ENCODE measurements at regions of chr11 and their contacts with region 1.

Region 1: GRCh38 chr11:117107701-117108590 is 9.7 kb upstream of the SIK3 start:
- H3K4me3 ChIP-seq: no peak overlapping the region
- H3K27ac ChIP-seq: no peak overlapping the region
- H3K4me1 ChIP-seq: no peaks in the 10 kb centered on the region
- CTCF ChIP-seq: no peak

Region 2: DNA sequence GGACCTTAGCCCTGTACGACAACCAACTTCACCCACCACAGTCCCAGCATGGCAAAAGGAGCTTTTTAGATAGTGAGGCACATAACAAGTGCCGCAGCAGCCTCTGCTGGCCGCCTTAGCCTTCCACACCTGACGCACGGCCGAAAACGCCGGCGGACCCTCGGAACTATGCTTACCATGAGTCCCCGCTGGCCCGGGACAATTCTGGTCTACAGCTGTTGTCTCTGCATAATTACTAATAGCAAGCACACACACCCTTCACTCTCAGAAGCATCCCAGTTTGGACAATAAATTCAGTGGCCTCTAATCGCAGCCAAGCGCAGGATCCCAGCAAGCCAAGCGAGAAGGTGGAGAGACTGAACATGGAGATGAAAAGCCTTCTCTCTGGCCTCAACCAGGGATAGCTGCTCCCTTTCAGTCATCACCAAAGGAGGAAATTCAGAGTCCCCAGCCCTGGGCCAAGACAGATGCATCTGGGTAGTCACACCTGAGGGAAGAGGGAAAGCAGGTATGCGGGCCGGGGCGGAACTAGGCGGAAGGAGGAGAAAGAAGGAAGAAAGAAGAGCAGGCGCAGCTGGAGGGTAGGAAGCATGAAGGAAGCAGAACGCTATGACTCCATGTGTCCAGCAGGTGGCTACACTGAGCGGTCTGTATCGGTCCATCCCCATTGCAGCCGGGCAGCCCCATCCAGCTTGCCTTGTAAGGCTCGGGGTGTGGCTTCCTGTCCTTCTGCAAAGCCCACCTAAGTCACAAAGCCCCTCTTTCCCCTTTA is 375.5 kb before region 1 on chr11:
- CTCF ChIA-PET with region 1: interaction called, 13 read pairs
- POLR2A ChIA-PET with region 1: no interaction called
- H3K4me3 ChIP-seq: no peak overlapping the region
- H3K27ac ChIP-seq: no peak overlapping the region
- H3K4me1 ChIP-seq: no peaks in the 10 kb centered on the region
- CTCF ChIP-seq: peak; percentile 71

Region 3: GRCh38 chr11:116835791-116836631 is 271.9 kb before region 1 on chr11:
- CTCF ChIA-PET with region 1: interaction called, 15 read pairs
- POLR2A ChIA-PET with region 1: no interaction called
- H3K4me3 ChIP-seq: no peak overlapping the region; the same call in 1 of the 2 replicates
- H3K27ac ChIP-seq: no peak overlapping the region; the same call in 1 of the 2 replicates
- H3K4me1 ChIP-seq: no peaks in the 10 kb centered on the region
- CTCF ChIP-seq: peak; percentile 90

Region 4: GRCh38 chr11:116890193-116890592 is 217.8 kb before region 1 on chr11:
- CTCF ChIA-PET with region 1: interaction called, 96 read pairs
- POLR2A ChIA-PET with region 1: no interaction called
- H3K4me3 ChIP-seq: no peak overlapping the region
- H3K27ac ChIP-seq: no peak overlapping the region
- H3K4me1 ChIP-seq: no peaks in the 10 kb centered on the region
- CTCF ChIP-seq: no peak

Region 5: GRCh38 chr11:116958246-116958645 is 149.7 kb before region 1 on chr11:
- CTCF ChIA-PET with region 1: no interaction called
- POLR2A ChIA-PET with region 1: no interaction called
- H3K4me3 ChIP-seq: no peak overlapping the region
- H3K27ac ChIP-seq: no peak overlapping the region
- H3K4me1 ChIP-seq: peaks cover 3% of the 10 kb centered on the region
- CTCF ChIP-seq: no peak

Region 6: DNA sequence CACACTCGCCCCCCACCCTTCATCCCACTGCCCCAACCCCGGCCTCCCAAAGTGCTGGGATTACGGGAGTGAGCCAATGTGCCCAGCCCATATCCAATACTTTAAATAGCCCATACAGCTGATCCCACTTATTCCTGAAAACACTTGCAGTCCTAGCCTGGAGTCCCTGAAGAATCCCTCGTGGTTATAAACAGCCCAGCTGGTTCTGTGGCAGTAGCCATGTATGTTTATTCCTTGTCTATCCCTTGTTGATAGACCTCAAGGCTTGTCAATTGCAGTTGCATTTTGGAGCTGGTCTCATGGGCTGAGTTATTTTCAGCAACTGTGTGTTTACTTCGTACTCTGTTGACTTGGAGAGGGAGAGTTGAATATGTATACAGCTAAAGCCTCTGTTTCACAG is 14.6 kb after region 1 on chr11:
- CTCF ChIA-PET with region 1: interaction called, 13 read pairs
- POLR2A ChIA-PET with region 1: no interaction called
- H3K4me3 ChIP-seq: no peak overlapping the region
- H3K27ac ChIP-seq: no peak overlapping the region
- H3K4me1 ChIP-seq: no peaks in the 10 kb centered on the region
- CTCF ChIP-seq: no peak

Measured in HEK293 (cell line).